CD4-positive, alpha-beta memory T cell (primary cell): ENCODE measurements at regions of chr15 and their contacts with region 1.

Region 1: GRCh38 chr15:45429974-45430792 is 51.8 kb upstream of the GATM start:
- DNase-seq: peak; percentile 78 to 84 (median 80)
- H3K4me3 ChIP-seq: peak overlapping the region; percentile 44 to 56
- H3K4me3 Mint-ChIP-seq: peak overlapping the region in 7 of 8 donors; percentile 9 to 70 (median 44)
- H3K27ac ChIP-seq: no peak overlapping the region
- H3K27ac Mint-ChIP-seq: no peak overlapping the region
- H3K4me1 ChIP-seq: peaks cover 12% of the 10 kb centered on the region
- H3K4me1 Mint-ChIP-seq: no peaks in the 10 kb centered on the region
- H3K27me3 ChIP-seq: no peaks in the 10 kb centered on the region
- H3K27me3 Mint-ChIP-seq: peaks cover 0 to 4% of the 10 kb centered on the region in 2 donors

Region 2: GRCh38 chr15:45414215-45414885 is 15.8 kb before region 1 on chr15:
- CTCF ChIA-PET with region 1: interaction called, 36 read pairs
- POLR2A ChIA-PET with region 1: no interaction called
- intact Hi-C with region 1: no loop called
- DNase-seq: peak in 1 of 5 donors; percentile 10
- H3K4me3 ChIP-seq: no peak overlapping the region
- H3K4me3 Mint-ChIP-seq: peak overlapping the region in 5 of 8 donors; percentile 1 to 40 (median 18)
- H3K27ac ChIP-seq: no peak overlapping the region
- H3K27ac Mint-ChIP-seq: peak overlapping the region; percentile 39 to 66 (median 47)
- H3K4me1 ChIP-seq: peaks cover 22% of the 10 kb centered on the region
- H3K4me1 Mint-ChIP-seq: peaks cover 17 to 28% (median 20%) of the 10 kb centered on the region in 4 donors
- H3K27me3 ChIP-seq: no peaks in the 10 kb centered on the region
- H3K27me3 Mint-ChIP-seq: no peaks in the 10 kb centered on the region

Region 3: GRCh38 chr15:45449916-45450867 is 20.0 kb after region 1 on chr15:
- CTCF ChIA-PET with region 1: interaction called, 137 read pairs
- POLR2A ChIA-PET with region 1: no interaction called
- intact Hi-C with region 1: no loop called
- DNase-seq: no peak
- H3K4me3 ChIP-seq: no peak overlapping the region
- H3K4me3 Mint-ChIP-seq: no peak overlapping the region
- H3K27ac ChIP-seq: no peak overlapping the region
- H3K27ac Mint-ChIP-seq: peak overlapping the region in 1 of 7 donors; percentile 62
- H3K4me1 ChIP-seq: peaks cover 14% of the 10 kb centered on the region
- H3K4me1 Mint-ChIP-seq: peaks cover 12 to 17% (median 15%) of the 10 kb centered on the region in 4 donors
- H3K27me3 ChIP-seq: no peaks in the 10 kb centered on the region
- H3K27me3 Mint-ChIP-seq: no peaks in the 10 kb centered on the region

Region 4: GRCh38 chr15:46166750-46167149 is 736.6 kb after region 1 on chr15:
- CTCF ChIA-PET with region 1: no interaction called
- POLR2A ChIA-PET with region 1: no interaction called
- intact Hi-C with region 1: no loop called
- DNase-seq: no peak
- H3K4me3 ChIP-seq: no peak overlapping the region
- H3K4me3 Mint-ChIP-seq: no peak overlapping the region
- H3K27ac ChIP-seq: no peak overlapping the region
- H3K27ac Mint-ChIP-seq: no peak overlapping the region
- H3K4me1 ChIP-seq: no peaks in the 10 kb centered on the region
- H3K4me1 Mint-ChIP-seq: no peaks in the 10 kb centered on the region
- H3K27me3 ChIP-seq: no peaks in the 10 kb centered on the region
- H3K27me3 Mint-ChIP-seq: no peaks in the 10 kb centered on the region